ENCODE measurements at regions of chr13 and their contacts with region 1.

Region 1: GRCh38 chr13:20002787-20003186 is 44.3 kb downstream of the ZMYM2 start:
- DNase-seq: no peak
- H3K4me3 ChIP-seq: no peak overlapping the region
- H3K27ac ChIP-seq: no peak overlapping the region
- H3K4me1 ChIP-seq: no peaks in the 10 kb centered on the region
- H3K27me3 ChIP-seq: no peaks in the 10 kb centered on the region
- CTCF ChIP-seq: no peak
- EP300 ChIP-seq: no peak
- POLR2A ChIP-seq: no peak
- RAD21 ChIP-seq: no peak

Region 2: GRCh38 chr13:19959831-19960652 is 42.7 kb before region 1 on chr13:
- CTCF ChIA-PET with region 1: no interaction called
- POLR2A ChIA-PET with region 1: no interaction called
- DNase-seq: peak; percentile 70 to 77
- H3K4me3 ChIP-seq: peak overlapping the region; percentile 73 to 99 (median 93)
- H3K27ac ChIP-seq: peak overlapping the region; percentile 93
- H3K4me1 ChIP-seq: peaks cover 0 to 6% (median 3%) of the 10 kb centered on the region in 4 experiments; a peak in 2 of 7 replicates
- H3K27me3 ChIP-seq: no peaks in the 10 kb centered on the region
- CTCF ChIP-seq: peak; percentile 74 to 98 (median 86)
- EP300 ChIP-seq: no peak
- POLR2A ChIP-seq: peak; percentile 14 to 67
- RAD21 ChIP-seq: peak; percentile 50 to 54; a peak in 3 of 4 replicates

Region 3: GRCh38 chr13:19984430-19985218 is 18.2 kb before region 1 on chr13:
- CTCF ChIA-PET with region 1: interaction called, 33 read pairs
- POLR2A ChIA-PET with region 1: interaction called, 6 read pairs
- DNase-seq: no peak
- H3K4me3 ChIP-seq: no peak overlapping the region
- H3K27ac ChIP-seq: no peak overlapping the region
- H3K4me1 ChIP-seq: peaks cover 0 to 7% (median under 1%) of the 10 kb centered on the region in 4 experiments; a peak in 4 of 7 replicates
- H3K27me3 ChIP-seq: no peaks in the 10 kb centered on the region
- CTCF ChIP-seq: peak in 2 of 3 experiments; percentile 44 to 68; a peak in 2 of 4 replicates
- EP300 ChIP-seq: no peak
- POLR2A ChIP-seq: no peak
- RAD21 ChIP-seq: peak; percentile 39 to 52; a peak in 3 of 4 replicates

Region 4: DNA sequence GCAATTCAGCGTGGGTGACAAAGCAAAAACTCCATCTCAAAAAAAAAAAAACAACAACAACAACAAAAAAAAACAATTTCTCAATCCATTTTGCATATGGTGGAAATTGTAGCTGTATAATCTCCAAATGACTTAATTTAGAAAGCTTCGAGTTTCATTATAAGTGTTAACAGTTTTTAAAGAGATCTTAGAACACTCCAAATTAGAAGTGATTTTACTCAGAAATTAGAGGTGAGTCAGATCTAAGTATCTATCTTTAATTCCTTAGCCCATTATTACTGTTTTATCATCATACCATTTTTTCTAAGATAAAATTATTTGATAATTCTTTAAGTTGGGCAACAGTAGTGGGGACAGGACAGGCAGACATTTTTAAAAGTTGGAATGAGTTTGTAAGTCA is 16.3 kb after region 1 on chr13:
- CTCF ChIA-PET with region 1: no interaction called
- POLR2A ChIA-PET with region 1: no interaction called
- DNase-seq: no peak
- H3K4me3 ChIP-seq: no peak overlapping the region
- H3K27ac ChIP-seq: no peak overlapping the region
- H3K4me1 ChIP-seq: no peaks in the 10 kb centered on the region
- H3K27me3 ChIP-seq: no peaks in the 10 kb centered on the region
- CTCF ChIP-seq: no peak
- EP300 ChIP-seq: no peak
- POLR2A ChIP-seq: no peak
- RAD21 ChIP-seq: no peak